Ovary (tissue), 10 donors: ENCODE measurements at regions of chr10 and their contacts with region 1.

Region 1: GRCh38 chr10:23314835-23315239 is 29.8 kb downstream of the C10orf67 start:
- DNase-seq: peak in 3 of 5 donors; percentile 16 to 50 (median 37)
- H3K4me3 ChIP-seq: no peak overlapping the region
- H3K27ac ChIP-seq: no peak overlapping the region
- H3K4me1 ChIP-seq: peaks cover 2% of the 10 kb centered on the region
- H3K27me3 ChIP-seq: no peaks in the 10 kb centered on the region
- CTCF ChIP-seq: peak; percentile 47 to 62 (median 47)
- EP300 ChIP-seq: no peak
- POLR2A ChIP-seq: no peak

Region 2: GRCh38 chr10:23158370-23158769 is 156.5 kb before region 1 on chr10:
- intact Hi-C with region 1: no loop called
- DNase-seq: peak in 2 of 5 donors; percentile 33 to 46
- H3K4me3 ChIP-seq: no peak overlapping the region
- H3K27ac ChIP-seq: no peak overlapping the region
- H3K4me1 ChIP-seq: no peaks in the 10 kb centered on the region
- H3K27me3 ChIP-seq: no peaks in the 10 kb centered on the region
- CTCF ChIP-seq: peak; percentile 39 to 53 (median 39)
- EP300 ChIP-seq: no peak
- POLR2A ChIP-seq: no peak

Region 3: GRCh38 chr10:23362879-23363792 is 48.3 kb after region 1 on chr10:
- intact Hi-C with region 1: no loop called
- DNase-seq: no peak
- H3K4me3 ChIP-seq: no peak overlapping the region
- H3K27ac ChIP-seq: no peak overlapping the region
- H3K4me1 ChIP-seq: no peaks in the 10 kb centered on the region
- H3K27me3 ChIP-seq: no peaks in the 10 kb centered on the region
- CTCF ChIP-seq: no peak
- EP300 ChIP-seq: no peak
- POLR2A ChIP-seq: no peak

Region 4: GRCh38 chr10:23702977-23703414 is 388.2 kb after region 1 on chr10:
- intact Hi-C with region 1: loop called in 1 of 4 experiments (anchors 10 kb)
- DNase-seq: peak in 2 of 5 donors; percentile 20 to 30
- H3K4me3 ChIP-seq: no peak overlapping the region
- H3K27ac ChIP-seq: no peak overlapping the region
- H3K4me1 ChIP-seq: no peaks in the 10 kb centered on the region
- H3K27me3 ChIP-seq: no peaks in the 10 kb centered on the region
- CTCF ChIP-seq: no peak
- EP300 ChIP-seq: no peak
- POLR2A ChIP-seq: no peak